WTC11 (cell line): ENCODE measurements at regions of chr10 and their contacts with region 1.

Region 1: DNA sequence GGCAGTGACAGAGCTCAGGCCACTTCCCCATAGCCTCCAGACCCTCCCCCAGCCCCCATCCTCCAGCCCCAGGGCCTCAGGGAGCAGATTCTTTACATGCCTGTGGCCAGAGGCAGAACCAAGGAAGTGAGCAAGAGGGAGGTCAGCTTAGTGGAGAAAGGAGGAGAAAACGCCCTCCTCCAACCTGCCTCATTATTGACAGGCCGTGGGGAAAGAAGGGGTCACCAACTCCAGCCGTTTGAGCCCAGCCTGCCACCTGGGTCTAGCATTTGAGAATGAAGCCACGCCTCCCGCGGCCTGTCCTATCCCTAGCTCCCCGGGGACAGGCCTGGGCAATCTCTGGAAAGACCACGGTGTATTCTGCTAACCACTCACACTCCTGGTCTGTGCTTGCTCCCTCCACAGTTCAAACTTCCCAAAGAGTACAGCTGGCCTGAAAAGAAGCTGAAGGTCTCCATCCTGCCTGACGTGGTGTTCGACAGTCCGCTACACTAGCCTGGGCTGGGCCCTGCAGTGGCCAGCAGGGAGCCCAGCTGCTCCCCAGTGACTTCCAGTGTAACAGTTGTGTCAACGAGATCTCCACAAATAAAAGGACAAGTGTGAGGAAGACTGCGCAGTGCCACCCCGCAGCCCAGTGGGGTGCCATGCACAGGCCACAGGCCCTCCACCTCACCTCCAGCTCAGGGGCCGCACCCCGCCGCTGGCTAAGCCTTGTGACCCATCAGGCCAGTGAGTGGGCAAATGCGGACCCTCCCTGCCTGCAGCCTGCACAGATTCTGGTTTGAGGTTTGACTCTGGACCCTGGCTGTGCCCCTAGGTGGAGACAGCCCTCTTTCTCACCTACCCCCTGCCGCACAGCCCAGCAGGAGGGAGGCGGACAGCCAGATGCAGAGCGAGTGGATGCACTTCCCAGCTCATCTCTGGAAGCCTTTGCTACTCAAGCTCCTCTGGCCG is 14.3 kb upstream of the TRIM8 start:
- DNase-seq: peak; percentile 67
- ATAC-seq: peak; percentile 74
- H3K4me3 Mint-ChIP-seq: no peak overlapping the region; the same call in 1 of the 2 replicates
- H3K27ac Mint-ChIP-seq: peak overlapping the region; percentile 90
- H3K4me1 Mint-ChIP-seq: peaks cover 85% of the 10 kb centered on the region
- H3K27me3 Mint-ChIP-seq: no peaks in the 10 kb centered on the region; the same call in 1 of the 2 replicates
- CTCF ChIP-seq: no peak

Region 2: DNA sequence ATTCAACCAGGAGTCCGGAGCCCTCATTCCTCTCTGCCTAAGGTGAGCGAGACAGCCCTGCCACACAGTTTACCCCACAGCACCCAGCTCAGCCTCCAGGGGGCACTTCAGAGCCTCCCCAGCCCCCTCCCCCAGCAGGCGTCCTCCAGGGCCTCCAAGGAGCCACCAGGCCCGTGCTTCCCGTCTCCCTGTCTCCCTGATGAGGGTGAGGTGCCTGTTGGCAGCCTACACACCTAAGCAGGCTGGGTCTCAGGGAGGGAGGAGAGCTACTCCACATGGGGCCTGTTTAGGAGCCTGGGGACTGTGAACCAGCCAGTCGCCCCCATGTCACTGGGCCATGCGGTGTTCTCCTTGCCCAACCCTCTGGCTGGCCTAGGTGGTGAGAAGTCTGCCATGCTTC is 14.6 kb before region 1 on chr10:
- CTCF ChIA-PET with region 1: interaction called, 41 read pairs
- POLR2A ChIA-PET with region 1: interaction called, 4 read pairs
- DNase-seq: peak; percentile 77
- ATAC-seq: peak; percentile 86
- H3K4me3 Mint-ChIP-seq: no peak overlapping the region
- H3K27ac Mint-ChIP-seq: no peak overlapping the region
- H3K4me1 Mint-ChIP-seq: peaks cover 8% of the 10 kb centered on the region
- H3K27me3 Mint-ChIP-seq: no peaks in the 10 kb centered on the region
- CTCF ChIP-seq: peak; percentile 43

Region 3: DNA sequence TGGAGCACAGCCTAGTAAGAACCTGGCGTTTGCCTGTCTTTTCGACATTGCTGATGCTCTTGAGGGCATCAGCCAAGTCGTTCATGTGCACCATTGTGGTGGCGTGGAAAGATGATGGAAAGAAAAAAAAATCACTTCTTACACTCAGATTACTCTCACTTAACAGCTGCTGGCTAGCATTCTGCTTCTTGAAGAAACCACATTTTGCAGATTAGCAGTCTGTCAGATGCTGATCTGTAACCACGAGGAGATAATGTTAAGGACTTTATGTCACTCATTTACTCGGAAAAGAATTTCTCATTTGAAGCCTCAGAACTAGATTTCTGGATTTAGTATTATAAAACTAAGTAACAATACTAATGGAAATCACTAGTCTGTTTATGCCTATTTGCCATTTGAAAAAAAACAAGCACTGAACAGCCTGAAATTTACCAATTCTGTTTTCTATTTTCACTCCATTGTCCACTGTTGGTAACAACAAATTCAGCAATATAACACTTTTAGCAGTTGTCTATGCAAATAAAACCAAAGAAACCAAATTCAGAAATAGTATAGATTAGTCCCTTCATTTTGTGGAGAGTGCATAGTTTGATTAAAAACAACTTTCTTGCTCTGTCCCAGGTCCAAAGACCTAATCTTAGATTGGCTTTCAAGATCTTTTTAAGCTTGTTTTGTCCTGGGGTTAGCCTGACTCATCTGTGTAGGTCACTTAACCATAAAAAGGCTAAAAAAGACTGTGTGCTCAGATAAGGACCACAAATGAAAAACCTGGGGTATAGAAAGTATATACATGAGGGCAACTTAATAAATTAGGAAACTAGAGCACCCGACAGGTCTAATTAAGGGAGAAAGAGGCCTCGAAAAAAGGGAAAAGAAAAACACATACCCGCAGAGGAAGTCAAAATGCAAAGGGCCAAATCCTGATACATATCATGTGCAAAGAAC is 495.7 kb after region 1 on chr10:
- CTCF ChIA-PET with region 1: no interaction called
- POLR2A ChIA-PET with region 1: no interaction called
- DNase-seq: no peak
- ATAC-seq: no peak
- H3K4me3 Mint-ChIP-seq: no peak overlapping the region
- H3K27ac Mint-ChIP-seq: peak overlapping the region; percentile 43; the same call in 1 of the 2 replicates
- H3K4me1 Mint-ChIP-seq: peaks cover 8% of the 10 kb centered on the region
- H3K27me3 Mint-ChIP-seq: no peaks in the 10 kb centered on the region
- CTCF ChIP-seq: no peak